ENCODE measurements at regions of chr9 and their contacts with region 1.

Region 1: DNA sequence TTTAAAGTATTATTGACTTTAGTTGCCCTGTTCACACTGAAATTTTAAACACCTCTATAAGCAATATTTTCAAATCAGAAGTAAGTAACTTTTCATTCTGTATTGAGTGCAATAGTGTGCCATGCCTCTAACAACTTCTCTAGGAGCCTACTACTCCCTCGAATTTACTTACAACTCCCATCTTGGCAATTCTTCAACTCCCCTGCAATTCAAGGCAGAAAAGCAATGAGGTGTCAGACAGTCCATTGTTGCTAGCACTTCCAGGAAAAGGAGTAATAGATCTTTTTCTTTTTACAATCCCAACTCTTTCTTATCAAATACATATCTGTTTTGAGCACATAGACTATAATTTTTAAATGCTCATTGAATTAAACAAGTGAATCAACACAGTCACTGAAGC is 222.7 kb upstream of the PUM3 start:
- DNase-seq: no peak
- H3K4me3 ChIP-seq: no peak overlapping the region
- H3K27ac ChIP-seq: no peak overlapping the region
- H3K4me1 ChIP-seq: no peaks in the 10 kb centered on the region
- H3K27me3 ChIP-seq: no peaks in the 10 kb centered on the region
- CTCF ChIP-seq: no peak
- POLR2A ChIP-seq: no peak

Region 2: GRCh38 chr9:2662496-2662895 is 404.1 kb before region 1 on chr9:
- intact Hi-C with region 1: no loop called
- DNase-seq: no peak
- H3K4me3 ChIP-seq: no peak overlapping the region
- H3K27ac ChIP-seq: no peak overlapping the region
- H3K4me1 ChIP-seq: no peaks in the 10 kb centered on the region
- H3K27me3 ChIP-seq: no peaks in the 10 kb centered on the region
- CTCF ChIP-seq: no peak
- POLR2A ChIP-seq: no peak

Region 3: GRCh38 chr9:3043369-3043768 is 23.2 kb before region 1 on chr9:
- intact Hi-C with region 1: no loop called
- DNase-seq: no peak
- H3K4me3 ChIP-seq: no peak overlapping the region
- H3K27ac ChIP-seq: no peak overlapping the region
- H3K4me1 ChIP-seq: no peaks in the 10 kb centered on the region
- H3K27me3 ChIP-seq: no peaks in the 10 kb centered on the region
- CTCF ChIP-seq: no peak
- POLR2A ChIP-seq: no peak

Region 4: GRCh38 chr9:4243113-4243512 is 1176.5 kb after region 1 on chr9:
- intact Hi-C with region 1: loop called (anchors 5 kb)
- DNase-seq: no peak
- H3K4me3 ChIP-seq: no peak overlapping the region
- H3K27ac ChIP-seq: no peak overlapping the region
- H3K4me1 ChIP-seq: no peaks in the 10 kb centered on the region
- H3K27me3 ChIP-seq: no peaks in the 10 kb centered on the region
- CTCF ChIP-seq: no peak
- POLR2A ChIP-seq: no peak